MCF 10A (cell line): ENCODE measurements at regions of chr11 and their contacts with region 1.

Region 1: DNA sequence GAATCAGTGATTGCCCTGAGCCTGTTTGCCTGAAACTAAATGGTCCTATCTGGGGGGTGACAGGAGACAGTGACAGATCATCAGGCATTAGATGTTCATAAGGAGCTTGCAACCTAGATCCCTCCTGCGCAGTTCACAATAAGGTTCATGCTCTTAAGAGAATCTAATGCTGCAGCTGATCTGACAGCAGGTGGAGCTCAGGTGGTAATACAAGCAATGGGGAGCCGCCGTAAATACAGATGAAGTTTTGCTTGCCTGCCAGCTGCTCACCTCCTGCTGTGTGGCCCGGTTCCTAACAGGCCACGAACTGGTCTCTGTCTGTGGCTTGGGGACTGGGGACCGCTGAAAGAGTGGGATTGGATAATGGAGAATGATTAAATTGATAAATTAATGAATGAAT is 14.0 kb downstream of the NOX4 start:
- DNase-seq: peak; percentile 2
- H3K4me3 Mint-ChIP-seq: no peak overlapping the region
- H3K27ac Mint-ChIP-seq: no peak overlapping the region
- H3K4me1 Mint-ChIP-seq: no peaks in the 10 kb centered on the region
- H3K27me3 Mint-ChIP-seq: peaks cover 93% of the 10 kb centered on the region
- CTCF ChIP-seq: no peak

Region 2: GRCh38 chr11:89433278-89433677 is 43.9 kb before region 1 on chr11:
- CTCF ChIA-PET with region 1: no interaction called
- POLR2A ChIA-PET with region 1: no interaction called
- intact Hi-C with region 1: loop called (anchors 5 kb)
- DNase-seq: no peak
- H3K4me3 Mint-ChIP-seq: no peak overlapping the region
- H3K27ac Mint-ChIP-seq: no peak overlapping the region
- H3K4me1 Mint-ChIP-seq: no peaks in the 10 kb centered on the region
- H3K27me3 Mint-ChIP-seq: peaks cover 65% of the 10 kb centered on the region
- CTCF ChIP-seq: no peak

Region 3: GRCh38 chr11:89495956-89496355 is 18.8 kb after region 1 on chr11:
- CTCF ChIA-PET with region 1: no interaction called
- POLR2A ChIA-PET with region 1: no interaction called
- intact Hi-C with region 1: no loop called
- DNase-seq: peak; percentile 5
- H3K4me3 Mint-ChIP-seq: no peak overlapping the region
- H3K27ac Mint-ChIP-seq: no peak overlapping the region
- H3K4me1 Mint-ChIP-seq: no peaks in the 10 kb centered on the region
- H3K27me3 Mint-ChIP-seq: peaks cover 84% of the 10 kb centered on the region
- CTCF ChIP-seq: no peak